Activated CD4-positive, alpha-beta memory T cell treated with anti-CD3 and anti-CD28 coated beads for 36 hours (primary cell): ENCODE measurements at regions of chr2 and their contacts with region 1.

Region 1: DNA sequence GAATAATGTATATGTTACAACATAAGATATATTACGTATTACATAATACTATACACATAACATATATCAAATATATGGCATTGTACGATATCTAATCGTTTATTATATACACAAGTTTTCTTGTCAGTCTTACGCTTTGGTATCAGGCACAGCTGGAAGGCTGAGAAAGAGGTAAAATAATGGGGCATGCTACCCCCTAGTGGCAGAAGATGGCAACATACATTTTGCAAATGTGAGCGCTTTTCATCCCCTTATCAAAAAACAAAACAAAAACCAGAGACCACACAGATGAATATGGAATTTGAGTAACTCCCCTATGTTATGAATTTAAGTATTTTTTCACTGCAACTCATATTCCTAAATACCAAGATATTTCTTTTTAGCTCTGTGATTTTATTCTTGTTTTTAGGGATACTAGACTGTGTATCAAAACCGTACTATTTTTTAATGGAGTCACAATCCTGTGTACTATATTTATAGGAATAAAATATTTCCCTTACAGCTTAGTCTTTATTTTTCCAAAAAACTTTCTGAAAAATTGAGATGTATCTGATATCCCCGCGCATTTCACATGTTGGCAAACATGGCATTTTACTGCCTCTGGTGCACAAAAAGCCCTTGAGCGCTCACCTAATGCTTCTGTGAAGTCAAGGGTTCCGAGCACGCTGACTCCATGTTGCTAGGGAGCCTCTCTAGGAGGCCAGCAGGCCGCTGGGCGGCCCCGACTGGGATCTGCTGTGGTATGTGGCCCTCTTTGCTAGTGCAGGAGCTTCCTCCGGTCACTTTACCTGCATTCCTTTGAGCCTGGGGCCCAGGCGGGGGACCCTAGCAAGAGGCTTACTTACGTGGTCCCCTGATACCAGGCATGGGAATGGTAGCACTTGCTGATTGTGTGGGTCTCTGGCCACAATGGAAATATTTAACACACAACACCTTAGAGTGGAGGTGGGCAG is 62.5 kb downstream of the SLC4A3 start:
- DNase-seq: peak; percentile 52
- H3K4me3 Mint-ChIP-seq: no peak overlapping the region
- H3K27ac Mint-ChIP-seq: no peak overlapping the region
- H3K4me1 Mint-ChIP-seq: peaks cover 16% of the 10 kb centered on the region
- H3K27me3 Mint-ChIP-seq: peaks cover 35% of the 10 kb centered on the region

Region 2: GRCh38 chr2:219543601-219544358 is 146.2 kb before region 1 on chr2 and contains the starts of genes CHPF and TMEM198:
- CTCF ChIA-PET with region 1: interaction called, 9 read pairs
- POLR2A ChIA-PET with region 1: no interaction called
- intact Hi-C with region 1: loop called (anchors 1 kb)
- DNase-seq: peak; percentile 98
- H3K4me3 Mint-ChIP-seq: peak within 1 kb of the TSS; percentile 92
- H3K27ac Mint-ChIP-seq: peak within 1 kb of the TSS; percentile 65
- H3K4me1 Mint-ChIP-seq: peaks cover 22% of the 10 kb centered on the region
- H3K27me3 Mint-ChIP-seq: peaks cover 5% of the 10 kb centered on the region
- total RNA-seq, gene CHPF: 19.9 to 21.0 TPM
- total RNA-seq, gene TMEM198: 2.6 to 4.4 TPM

Region 3: GRCh38 chr2:219597552-219598307 is 92.2 kb before region 1 on chr2 and contains the start of gene STK11IP:
- CTCF ChIA-PET with region 1: interaction called, 4 read pairs
- POLR2A ChIA-PET with region 1: no interaction called
- intact Hi-C with region 1: loop called (anchors 1 kb)
- DNase-seq: peak; percentile 96
- H3K4me3 Mint-ChIP-seq: peak within 1 kb of the TSS; percentile 88
- H3K27ac Mint-ChIP-seq: peak within 1 kb of the TSS; percentile 93
- H3K4me1 Mint-ChIP-seq: peaks cover 10% of the 10 kb centered on the region
- H3K27me3 Mint-ChIP-seq: peaks cover 4% of the 10 kb centered on the region
- total RNA-seq, gene STK11IP: 28.7 to 28.9 TPM

Region 4: DNA sequence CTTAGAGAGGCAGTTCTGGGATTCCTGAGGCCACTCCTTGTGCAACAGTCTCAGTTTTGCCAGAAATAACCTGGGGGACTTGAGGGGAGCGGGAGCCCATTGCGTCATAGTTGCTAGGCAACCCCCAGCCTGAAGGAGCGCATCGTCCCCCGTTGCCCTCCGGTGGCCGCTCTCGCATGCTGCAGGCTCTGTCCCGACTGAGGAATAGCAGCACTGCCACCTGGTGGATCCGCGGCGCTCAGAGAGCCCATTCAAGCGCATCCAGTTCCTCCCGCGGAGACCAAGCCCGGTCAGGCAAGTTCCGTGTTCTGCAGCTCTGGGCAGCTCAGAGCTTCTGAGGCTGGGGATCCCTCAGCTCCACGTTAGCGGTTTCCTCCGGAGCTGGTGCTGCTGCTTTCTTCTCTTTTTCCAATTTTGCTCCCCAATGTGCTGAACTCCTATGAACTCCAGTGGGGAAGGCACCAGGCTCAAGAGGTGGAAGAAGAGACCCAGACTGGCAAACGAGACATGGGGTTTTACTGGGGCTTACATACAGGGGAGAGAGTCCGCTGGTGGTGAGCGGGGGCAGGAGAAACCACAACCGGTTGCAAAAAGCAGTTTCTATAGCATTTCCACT is 47.4 kb before region 1 on chr2:
- CTCF ChIA-PET with region 1: interaction called, 6 read pairs
- POLR2A ChIA-PET with region 1: no interaction called
- intact Hi-C with region 1: loop called (anchors 5 kb)
- DNase-seq: peak; percentile 93
- H3K4me3 Mint-ChIP-seq: no peak overlapping the region
- H3K27ac Mint-ChIP-seq: no peak overlapping the region
- H3K4me1 Mint-ChIP-seq: peaks cover 7% of the 10 kb centered on the region
- H3K27me3 Mint-ChIP-seq: peaks cover 9% of the 10 kb centered on the region

Region 5: GRCh38 chr2:219675221-219675620 is 14.7 kb before region 1 on chr2:
- CTCF ChIA-PET with region 1: interaction called, 13 read pairs
- POLR2A ChIA-PET with region 1: no interaction called
- intact Hi-C with region 1: no loop called
- DNase-seq: no peak
- H3K4me3 Mint-ChIP-seq: no peak overlapping the region
- H3K27ac Mint-ChIP-seq: no peak overlapping the region
- H3K4me1 Mint-ChIP-seq: no peaks in the 10 kb centered on the region
- H3K27me3 Mint-ChIP-seq: peaks cover 18% of the 10 kb centered on the region

Region 6: DNA sequence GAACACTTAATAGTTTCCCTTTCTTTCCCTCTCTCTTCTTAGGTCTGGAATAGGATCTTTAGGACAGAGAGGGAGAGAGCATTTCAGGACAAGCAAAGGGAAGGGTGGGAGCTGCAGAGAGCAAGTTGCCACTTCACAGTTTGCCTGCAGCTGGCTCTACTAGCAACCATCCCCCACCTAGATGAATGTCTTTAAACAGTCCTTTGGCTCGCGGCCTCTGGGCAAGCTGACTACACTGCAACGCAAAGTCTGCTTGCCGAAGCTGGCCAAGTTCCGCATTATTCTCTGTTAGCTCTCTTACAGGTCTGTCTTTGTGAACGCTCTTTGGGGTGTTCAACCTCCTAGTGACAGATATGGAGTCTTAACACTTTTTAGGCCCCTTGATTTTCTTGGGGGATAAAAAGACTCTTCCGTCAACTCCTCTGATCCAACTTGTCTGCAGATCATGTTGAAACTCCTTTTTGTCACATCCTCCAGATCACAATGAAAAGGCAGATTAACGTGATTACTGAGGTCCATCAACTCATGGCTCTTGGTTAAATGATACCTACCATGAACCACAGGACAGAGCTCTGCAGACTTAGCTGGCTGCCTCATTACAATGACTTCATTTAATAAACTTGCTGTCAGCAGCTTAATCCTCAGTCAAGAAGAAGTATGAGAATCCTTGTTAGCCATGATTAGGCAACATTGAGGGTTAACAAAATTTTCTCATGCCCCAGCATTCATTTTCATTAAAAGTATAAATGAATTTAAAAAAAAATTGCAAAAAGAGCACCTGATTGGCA is 12.1 kb after region 1 on chr2:
- CTCF ChIA-PET with region 1: interaction called, 13 read pairs
- POLR2A ChIA-PET with region 1: no interaction called
- intact Hi-C with region 1: no loop called
- DNase-seq: no peak
- H3K4me3 Mint-ChIP-seq: no peak overlapping the region
- H3K27ac Mint-ChIP-seq: no peak overlapping the region
- H3K4me1 Mint-ChIP-seq: no peaks in the 10 kb centered on the region
- H3K27me3 Mint-ChIP-seq: peaks cover 28% of the 10 kb centered on the region

Region 7: DNA sequence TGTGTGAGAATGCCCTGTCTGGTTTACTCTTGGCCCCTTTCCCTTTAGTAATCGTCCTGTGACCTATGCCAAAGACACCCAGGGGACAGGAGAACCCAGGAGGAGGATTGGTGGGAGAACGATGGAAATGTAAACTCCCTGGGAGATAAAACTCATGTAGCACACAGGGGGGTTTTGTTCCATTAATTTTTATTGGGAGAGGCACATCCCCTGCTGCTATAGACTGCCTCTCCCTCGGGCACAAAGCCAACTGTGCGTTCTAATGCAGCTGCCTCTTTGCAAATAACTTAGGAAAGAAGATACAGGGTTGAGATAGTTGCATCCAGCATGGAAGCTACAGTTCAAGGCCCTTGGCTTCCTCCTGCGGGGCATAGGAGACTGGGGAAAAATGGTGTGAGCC is 427.1 kb after region 1 on chr2:
- CTCF ChIA-PET with region 1: no interaction called
- POLR2A ChIA-PET with region 1: no interaction called
- intact Hi-C with region 1: no loop called
- DNase-seq: no peak
- H3K4me3 Mint-ChIP-seq: no peak overlapping the region
- H3K27ac Mint-ChIP-seq: no peak overlapping the region
- H3K4me1 Mint-ChIP-seq: no peaks in the 10 kb centered on the region
- H3K27me3 Mint-ChIP-seq: no peaks in the 10 kb centered on the region

Region 8: DNA sequence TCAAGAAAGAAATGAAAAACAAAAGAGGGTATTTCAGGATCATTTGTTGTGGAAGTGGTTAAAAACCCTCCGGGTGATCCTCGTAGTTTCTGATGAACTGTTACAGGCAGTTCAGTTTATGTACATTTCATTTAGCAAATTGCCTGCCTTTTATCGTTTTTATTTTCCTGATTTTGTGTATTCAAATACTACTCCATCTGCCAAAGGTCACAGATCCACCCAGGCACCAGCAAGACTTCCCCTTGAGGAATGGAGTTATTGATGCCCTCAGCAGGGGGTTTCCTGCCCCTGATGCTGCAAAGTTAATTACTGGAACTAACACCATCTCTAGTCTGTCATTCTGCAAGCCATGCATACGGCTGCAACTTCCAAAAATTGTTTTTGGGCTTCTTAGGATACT is 579.4 kb after region 1 on chr2:
- CTCF ChIA-PET with region 1: no interaction called
- POLR2A ChIA-PET with region 1: no interaction called
- intact Hi-C with region 1: no loop called
- DNase-seq: no peak
- H3K4me3 Mint-ChIP-seq: no peak overlapping the region
- H3K27ac Mint-ChIP-seq: no peak overlapping the region
- H3K4me1 Mint-ChIP-seq: no peaks in the 10 kb centered on the region
- H3K27me3 Mint-ChIP-seq: no peaks in the 10 kb centered on the region